ENCODE measurements at regions of chr10 and their contacts with region 1.

Region 1: DNA sequence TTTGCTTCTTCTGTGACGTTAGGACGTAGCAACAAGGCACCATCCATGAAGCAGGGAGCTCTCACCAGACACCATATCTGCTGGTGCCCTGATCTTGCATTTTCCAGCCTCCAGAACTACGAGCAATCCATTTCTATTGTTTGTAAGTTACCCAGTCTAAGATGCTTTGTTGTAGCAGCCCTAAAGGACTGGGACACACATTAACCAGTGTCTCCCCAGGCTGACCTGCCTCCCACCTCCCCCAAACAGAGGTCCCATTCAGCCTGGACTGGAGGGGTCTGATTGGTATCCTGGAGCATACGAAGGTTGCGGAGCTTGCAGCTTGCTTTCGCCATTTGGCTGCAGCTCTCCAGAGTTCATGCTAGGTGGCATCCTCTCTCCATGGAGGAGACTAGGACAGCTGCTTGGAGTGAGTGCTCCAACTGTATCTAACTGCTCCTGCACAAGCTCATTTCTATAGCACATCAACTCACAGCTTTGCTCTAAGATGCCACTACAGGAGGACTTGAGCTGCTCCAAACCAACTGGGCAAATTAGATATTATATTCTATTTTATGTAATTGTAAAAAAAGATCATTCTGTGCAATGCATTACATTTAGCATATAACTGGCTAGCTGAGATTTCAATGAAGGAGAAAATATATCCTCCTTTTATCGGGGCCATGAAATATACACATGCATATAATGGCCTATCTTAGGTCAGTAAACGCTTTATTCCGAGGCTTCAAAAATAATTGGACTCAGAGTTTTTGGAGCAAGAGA is 8.0 kb upstream of the GRK5 start:
- DNase-seq: peak; percentile 78
- H3K4me3 ChIP-seq: no peak overlapping the region
- H3K4me3 Mint-ChIP-seq: no peak overlapping the region
- H3K27ac Mint-ChIP-seq: no peak overlapping the region
- H3K4me1 ChIP-seq: peaks cover 6% of the 10 kb centered on the region; the same call in 1 of the 2 replicates
- H3K4me1 Mint-ChIP-seq: peaks cover 7% of the 10 kb centered on the region
- H3K27me3 ChIP-seq: no peaks in the 10 kb centered on the region
- H3K27me3 Mint-ChIP-seq: no peaks in the 10 kb centered on the region
- CTCF ChIP-seq: peak; percentile 68 to 93

Region 2: DNA sequence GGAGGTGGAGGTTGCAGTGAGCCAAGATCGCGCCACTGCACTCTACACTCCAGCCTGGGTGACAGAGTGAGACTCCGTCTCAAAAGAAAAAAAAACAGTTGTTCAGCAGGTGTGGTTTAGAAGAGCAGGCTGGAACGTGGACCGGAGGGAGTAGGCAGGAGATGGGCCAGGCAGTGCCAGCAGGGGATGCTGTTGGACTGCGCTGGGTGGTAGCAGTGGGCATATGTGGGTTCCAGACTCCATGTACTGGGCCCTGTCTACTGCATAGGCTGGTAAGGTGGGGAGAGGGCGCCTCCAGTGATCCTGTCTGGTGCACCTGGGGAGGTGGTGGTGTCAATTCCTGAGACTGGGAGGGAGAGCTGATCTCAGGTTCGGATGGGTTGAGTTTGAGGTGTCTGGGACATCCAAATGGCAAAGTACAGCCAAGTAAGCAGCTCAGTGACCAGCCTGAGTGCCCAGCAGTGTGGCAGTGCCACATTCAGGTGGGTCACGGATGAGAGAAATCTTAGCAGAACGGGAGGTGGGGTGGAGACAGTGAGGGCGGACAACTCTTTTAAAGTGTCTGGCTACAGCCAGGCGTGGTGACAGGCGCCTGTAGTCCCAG is 59.8 kb before region 1 on chr10:
- CTCF ChIA-PET with region 1: interaction called, 3 read pairs
- POLR2A ChIA-PET with region 1: no interaction called
- intact Hi-C with region 1: loop called (anchors 2 kb)
- DNase-seq: peak; percentile 47 to 53
- H3K4me3 ChIP-seq: no peak overlapping the region
- H3K4me3 Mint-ChIP-seq: no peak overlapping the region
- H3K27ac Mint-ChIP-seq: peak overlapping the region; percentile 37
- H3K4me1 ChIP-seq: no peaks in the 10 kb centered on the region
- H3K4me1 Mint-ChIP-seq: peaks cover 5% of the 10 kb centered on the region
- H3K27me3 ChIP-seq: no peaks in the 10 kb centered on the region
- H3K27me3 Mint-ChIP-seq: no peaks in the 10 kb centered on the region
- CTCF ChIP-seq: peak in 1 of 2 experiments; percentile 60

Region 3: DNA sequence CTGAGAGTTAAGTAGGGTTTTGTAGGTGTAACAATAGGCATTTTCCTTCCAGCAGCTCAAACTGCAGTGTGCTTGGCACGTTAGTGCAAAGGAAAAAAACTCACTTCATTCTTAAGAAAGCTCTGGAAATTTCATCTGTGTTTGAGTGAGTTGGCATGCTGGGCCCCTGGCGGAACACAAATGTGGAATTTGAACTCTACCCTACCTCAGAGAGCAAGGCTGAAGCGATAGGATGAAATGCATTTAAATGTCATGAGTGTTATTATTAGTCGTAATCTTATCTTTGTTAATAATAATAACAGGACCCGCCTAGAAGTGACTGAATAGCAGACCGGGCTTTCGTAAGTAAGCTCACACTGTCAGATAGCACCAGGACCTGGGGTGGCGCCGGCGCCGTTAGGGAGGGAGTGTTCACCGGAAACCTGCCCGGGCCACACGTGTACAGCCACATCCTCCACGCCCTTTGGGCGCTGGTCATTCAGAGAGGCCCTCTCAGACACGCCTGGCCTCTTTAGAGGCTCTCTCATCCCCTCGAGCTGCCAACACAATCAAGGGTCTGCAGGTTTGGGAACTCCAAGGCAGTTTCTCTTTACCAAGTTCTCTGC is 71.5 kb after region 1 on chr10:
- CTCF ChIA-PET with region 1: interaction called, 14 read pairs
- POLR2A ChIA-PET with region 1: interaction called, 3 read pairs
- intact Hi-C with region 1: no loop called
- DNase-seq: peak; percentile 68 to 87
- H3K4me3 ChIP-seq: no peak overlapping the region
- H3K4me3 Mint-ChIP-seq: peak overlapping the region; percentile 71
- H3K27ac Mint-ChIP-seq: peak overlapping the region; percentile 88
- H3K4me1 ChIP-seq: peaks cover 29% of the 10 kb centered on the region
- H3K4me1 Mint-ChIP-seq: peaks cover 17% of the 10 kb centered on the region
- H3K27me3 ChIP-seq: no peaks in the 10 kb centered on the region
- H3K27me3 Mint-ChIP-seq: no peaks in the 10 kb centered on the region
- CTCF ChIP-seq: no peak

Region 4: GRCh38 chr10:119416855-119417254 is 217.4 kb after region 1 on chr10:
- CTCF ChIA-PET with region 1: interaction called, 14 read pairs
- POLR2A ChIA-PET with region 1: no interaction called
- intact Hi-C with region 1: loop called (anchors 1 kb)
- DNase-seq: peak; percentile 68 to 72
- H3K4me3 ChIP-seq: no peak overlapping the region
- H3K4me3 Mint-ChIP-seq: no peak overlapping the region
- H3K27ac Mint-ChIP-seq: no peak overlapping the region
- H3K4me1 ChIP-seq: peaks cover 28% of the 10 kb centered on the region
- H3K4me1 Mint-ChIP-seq: peaks cover 14% of the 10 kb centered on the region
- H3K27me3 ChIP-seq: no peaks in the 10 kb centered on the region
- H3K27me3 Mint-ChIP-seq: no peaks in the 10 kb centered on the region
- CTCF ChIP-seq: peak; percentile 60 to 79

Region 5: DNA sequence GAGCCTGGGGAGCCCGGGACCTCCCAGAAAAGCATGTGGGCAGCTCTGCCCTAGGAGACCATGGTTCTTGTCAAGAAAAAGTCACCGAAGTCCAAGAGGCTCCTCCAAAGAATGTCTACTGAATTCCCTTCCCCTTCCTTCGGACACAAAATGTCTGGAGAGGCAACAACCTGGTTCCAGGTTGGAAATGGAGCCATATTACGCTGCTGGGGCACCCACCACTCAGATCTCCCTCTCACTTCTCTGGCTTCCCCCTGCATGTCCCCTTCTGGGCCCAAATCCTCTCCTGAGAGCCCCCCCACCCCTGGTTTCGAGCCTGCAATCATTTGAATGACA is 290.5 kb after region 1 on chr10:
- CTCF ChIA-PET with region 1: interaction called, 33 read pairs
- POLR2A ChIA-PET with region 1: no interaction called
- intact Hi-C with region 1: loop called (anchors 2 kb)
- DNase-seq: no peak
- H3K4me3 ChIP-seq: no peak overlapping the region
- H3K4me3 Mint-ChIP-seq: no peak overlapping the region
- H3K27ac Mint-ChIP-seq: no peak overlapping the region
- H3K4me1 ChIP-seq: 0 out of 2 replicates have a peak, but pooled peaks cover 5% of the 10 kb centered on the region
- H3K4me1 Mint-ChIP-seq: no peaks in the 10 kb centered on the region
- H3K27me3 ChIP-seq: no peaks in the 10 kb centered on the region
- H3K27me3 Mint-ChIP-seq: no peaks in the 10 kb centered on the region
- CTCF ChIP-seq: peak in 1 of 2 experiments; percentile 15